BJ (cell line): ENCODE measurements at regions of chr4 and their contacts with region 1.

Region 1: DNA sequence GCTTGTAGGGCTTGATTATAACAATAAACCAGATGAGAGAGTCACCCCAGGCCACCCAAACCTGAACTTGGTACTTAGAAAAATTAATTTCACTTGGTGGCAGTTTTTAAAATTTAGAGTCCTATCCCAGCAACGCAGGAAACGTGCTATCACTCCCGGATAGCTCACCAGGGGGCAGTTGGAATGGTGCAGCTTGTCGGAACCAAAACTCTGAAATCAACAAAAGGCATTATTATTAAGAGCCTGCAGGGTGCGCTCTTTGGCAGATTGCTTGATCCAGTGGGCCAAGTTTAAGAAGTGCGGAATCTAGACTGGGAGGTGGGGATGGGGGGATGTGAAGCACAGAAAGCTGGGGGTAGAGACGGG is 2.4 kb downstream of the FRAS1 start:
- DNase-seq: peak; percentile 37
- H3K4me3 ChIP-seq: peak overlapping the region; percentile 68
- H3K27me3 ChIP-seq: no peaks in the 10 kb centered on the region
- CTCF ChIP-seq: peak; percentile 80

Region 2: GRCh38 chr4:78040431-78040830 is 19.1 kb before region 1 on chr4:
- CTCF ChIA-PET with region 1: interaction called, 12 read pairs
- POLR2A ChIA-PET with region 1: no interaction called
- DNase-seq: no peak
- H3K4me3 ChIP-seq: no peak overlapping the region
- H3K27me3 ChIP-seq: no peaks in the 10 kb centered on the region; the same call in 1 of the 2 replicates
- CTCF ChIP-seq: no peak

Region 3: GRCh38 chr4:78069859-78070258 is 10.4 kb after region 1 on chr4:
- CTCF ChIA-PET with region 1: interaction called, 17 read pairs
- POLR2A ChIA-PET with region 1: no interaction called
- DNase-seq: no peak
- H3K4me3 ChIP-seq: no peak overlapping the region
- H3K27me3 ChIP-seq: no peaks in the 10 kb centered on the region
- CTCF ChIP-seq: no peak

Region 4: DNA sequence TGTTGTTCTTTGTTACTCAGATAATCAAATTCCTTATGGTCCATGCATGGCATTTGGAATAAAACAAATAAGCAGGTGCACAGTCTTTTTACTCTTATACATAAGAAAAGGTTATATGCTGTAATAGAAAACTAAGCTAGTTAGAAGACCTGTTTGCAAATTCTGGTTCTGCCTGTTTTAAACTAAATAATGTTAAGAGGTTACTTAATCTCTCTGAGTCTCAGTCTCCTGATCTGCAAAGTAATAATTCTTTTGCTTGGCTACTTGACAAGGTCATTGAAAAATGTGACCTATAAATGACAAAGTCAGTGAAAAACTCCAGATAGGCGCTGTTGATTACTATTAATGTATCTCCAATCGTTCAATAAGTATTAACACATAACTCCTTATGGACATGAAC is 449.5 kb after region 1 on chr4:
- CTCF ChIA-PET with region 1: interaction called, 43 read pairs
- POLR2A ChIA-PET with region 1: no interaction called
- DNase-seq: no peak
- H3K4me3 ChIP-seq: no peak overlapping the region
- H3K27me3 ChIP-seq: no peaks in the 10 kb centered on the region
- CTCF ChIP-seq: no peak

Region 5: DNA sequence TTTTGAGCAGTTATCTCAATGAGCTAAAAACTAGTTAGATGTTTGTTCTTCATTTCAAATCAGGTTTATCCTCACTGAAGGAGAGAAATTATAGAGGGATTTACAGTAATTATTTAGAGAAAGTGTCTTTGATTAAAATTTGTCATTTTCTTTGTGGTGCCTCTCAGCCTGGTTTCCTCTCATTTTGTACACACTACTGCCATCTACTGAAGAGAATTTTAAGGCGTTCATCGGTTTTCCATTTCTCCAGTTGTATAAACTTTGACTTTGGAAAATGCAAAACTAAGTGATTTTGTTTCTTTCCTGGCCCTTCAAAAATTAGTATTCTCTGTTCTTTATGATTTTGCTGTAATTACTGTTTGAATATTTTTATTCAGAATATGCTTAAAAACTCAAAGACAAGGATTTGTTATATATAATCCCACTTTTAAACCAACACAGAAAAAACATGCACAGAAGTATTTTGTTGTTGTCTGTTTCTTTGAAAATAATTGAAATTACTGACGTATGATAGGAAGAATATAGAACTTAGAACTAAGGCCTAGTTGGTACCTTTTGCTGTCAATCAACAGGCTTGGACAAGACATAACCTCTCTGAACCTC is 457.6 kb after region 1 on chr4:
- CTCF ChIA-PET with region 1: interaction called, 43 read pairs
- POLR2A ChIA-PET with region 1: no interaction called
- DNase-seq: no peak
- H3K4me3 ChIP-seq: no peak overlapping the region
- H3K27me3 ChIP-seq: no peaks in the 10 kb centered on the region
- CTCF ChIP-seq: peak; percentile 69